Breast epithelium (tissue), 4 donors: ENCODE measurements at regions of chr1 and their contacts with region 1.

Region 1: DNA sequence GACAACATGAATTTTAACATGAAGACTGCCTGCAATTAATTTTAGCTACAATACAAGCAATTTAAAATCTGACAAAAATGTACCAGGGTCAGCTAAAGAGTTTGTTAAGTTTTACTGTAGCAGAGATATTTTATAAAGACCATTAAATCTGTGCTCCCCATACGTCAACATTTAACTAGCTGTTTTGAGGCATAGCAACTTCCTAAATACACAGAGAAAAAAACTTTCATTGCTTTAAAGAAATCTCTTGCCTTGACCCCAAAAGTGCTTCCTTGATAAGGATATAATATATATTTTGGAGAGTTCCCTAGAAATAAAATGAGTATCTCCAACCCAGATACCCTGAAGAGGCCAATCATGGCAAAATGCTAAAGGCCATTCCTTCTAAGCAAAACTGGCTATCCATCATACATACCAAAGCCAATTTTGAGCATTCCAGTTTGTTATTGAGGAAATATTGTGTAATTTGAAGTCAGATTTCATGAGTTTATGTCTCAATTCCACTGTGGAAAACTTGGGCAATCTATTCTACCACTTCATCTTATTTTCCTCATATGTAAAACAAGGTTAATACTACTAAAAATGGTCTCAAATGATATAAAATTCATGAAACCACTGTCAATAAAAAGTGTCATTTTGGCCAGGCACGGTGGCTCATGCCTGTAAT is 19.1 kb downstream of the ASPM start:
- DNase-seq: no peak
- H3K4me3 ChIP-seq: no peak overlapping the region
- H3K27ac ChIP-seq: no peak overlapping the region
- H3K4me1 ChIP-seq: no peaks in the 10 kb centered on the region
- H3K27me3 ChIP-seq: no peaks in the 10 kb centered on the region
- CTCF ChIP-seq: no peak
- POLR2A ChIP-seq: no peak

Region 2: DNA sequence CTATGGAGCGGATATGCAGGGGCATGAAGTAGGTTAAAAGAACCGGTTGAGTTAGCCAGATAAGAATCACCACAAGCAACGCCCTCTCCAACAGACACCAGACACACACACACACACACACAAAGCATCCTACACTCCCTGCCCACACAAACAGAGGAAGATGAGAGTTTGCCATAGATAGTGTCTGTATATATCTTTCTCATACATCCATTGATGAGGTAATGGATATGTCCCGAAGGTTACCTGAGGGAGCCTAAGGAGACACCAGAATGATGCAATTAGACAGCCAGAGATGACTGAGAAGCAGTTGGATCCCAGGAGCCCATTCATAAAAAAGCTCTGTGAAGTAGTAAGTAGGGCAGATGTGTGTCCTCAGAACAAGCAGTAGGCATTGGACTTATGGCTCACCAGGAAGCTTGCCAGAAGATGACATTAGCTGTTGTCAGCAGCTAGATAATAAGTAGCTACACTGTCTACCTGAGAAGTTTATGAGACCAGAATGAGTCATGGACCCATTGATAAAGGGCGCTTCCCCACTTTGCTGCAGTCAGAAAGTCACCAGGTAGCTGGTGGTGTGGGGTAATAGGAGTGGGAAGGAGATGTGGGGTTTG is 766.2 kb before region 1 on chr1:
- intact Hi-C with region 1: no loop called
- DNase-seq: no peak
- H3K4me3 ChIP-seq: no peak overlapping the region
- H3K27ac ChIP-seq: no peak overlapping the region
- H3K4me1 ChIP-seq: no peaks in the 10 kb centered on the region
- H3K27me3 ChIP-seq: no peaks in the 10 kb centered on the region
- CTCF ChIP-seq: no peak
- POLR2A ChIP-seq: no peak

Region 3: DNA sequence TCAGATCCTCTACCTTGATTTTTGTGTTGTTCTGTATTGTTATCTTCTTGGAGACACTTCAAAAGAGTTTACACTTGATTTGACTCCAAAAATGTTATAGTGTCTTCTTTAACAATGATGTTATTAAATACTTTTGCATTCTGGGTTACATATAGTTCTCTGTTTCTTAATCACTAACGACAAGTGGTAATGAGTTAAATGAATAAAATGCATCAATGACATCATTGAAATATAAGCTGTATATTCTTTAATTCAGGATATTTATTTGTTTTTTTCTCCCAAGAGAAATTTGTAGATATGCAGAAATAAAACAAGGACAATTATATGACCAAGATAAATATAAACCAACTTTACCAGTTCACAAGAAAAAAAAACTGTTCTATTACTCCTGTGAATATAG is 157.2 kb before region 1 on chr1:
- intact Hi-C with region 1: loop called (anchors 5 kb)
- DNase-seq: no peak
- H3K4me3 ChIP-seq: no peak overlapping the region
- H3K27ac ChIP-seq: no peak overlapping the region
- H3K4me1 ChIP-seq: no peaks in the 10 kb centered on the region
- H3K27me3 ChIP-seq: no peaks in the 10 kb centered on the region
- CTCF ChIP-seq: no peak
- POLR2A ChIP-seq: no peak

Region 4: GRCh38 chr1:197081159-197081753 is 46.1 kb before region 1 on chr1:
- intact Hi-C with region 1: no loop called
- DNase-seq: no peak
- H3K4me3 ChIP-seq: no peak overlapping the region
- H3K27ac ChIP-seq: no peak overlapping the region
- H3K4me1 ChIP-seq: no peaks in the 10 kb centered on the region
- H3K27me3 ChIP-seq: no peaks in the 10 kb centered on the region
- CTCF ChIP-seq: no peak
- POLR2A ChIP-seq: no peak